ENCODE measurements at regions of chr14 and their contacts with region 1.

Region 1: GRCh38 chr14:24366721-24367513 is 1.1 kb upstream of the NFATC4 start:
- DNase-seq: peak; percentile 96
- H3K4me3 ChIP-seq: peak overlapping the region; percentile 69 to 90 (median 80)
- H3K27ac ChIP-seq: peak overlapping the region; percentile 91 to 99 (median 98)
- H3K4me1 ChIP-seq: peaks cover 0 to 52% (median 37%) of the 10 kb centered on the region in 4 donors
- H3K27me3 ChIP-seq: no peaks in the 10 kb centered on the region
- CTCF ChIP-seq: no peak
- EP300 ChIP-seq: peak in 1 of 4 donors; percentile 46
- POLR2A ChIP-seq: peak; percentile 56 to 66

Region 2: GRCh38 chr14:24141097-24141880 is 225.6 kb before region 1 on chr14 and contains the start of gene EMC9:
- intact Hi-C with region 1: loop called (anchors 5 kb)
- DNase-seq: peak; percentile 100
- H3K4me3 ChIP-seq: peak within 1 kb of the TSS; percentile 73 to 91 (median 81)
- H3K27ac ChIP-seq: peak within 1 kb of the TSS; percentile 92 to 98 (median 96)
- H3K4me1 ChIP-seq: peaks cover 0 to 61% (median 51%) of the 10 kb centered on the region in 4 donors
- H3K27me3 ChIP-seq: no peaks in the 10 kb centered on the region
- CTCF ChIP-seq: peak; percentile 36 to 75 (median 64)
- EP300 ChIP-seq: no peak
- POLR2A ChIP-seq: peak; percentile 83 to 88
- total RNA-seq, gene EMC9: 5.0 to 20.9 (median 12.9) TPM

Region 3: DNA sequence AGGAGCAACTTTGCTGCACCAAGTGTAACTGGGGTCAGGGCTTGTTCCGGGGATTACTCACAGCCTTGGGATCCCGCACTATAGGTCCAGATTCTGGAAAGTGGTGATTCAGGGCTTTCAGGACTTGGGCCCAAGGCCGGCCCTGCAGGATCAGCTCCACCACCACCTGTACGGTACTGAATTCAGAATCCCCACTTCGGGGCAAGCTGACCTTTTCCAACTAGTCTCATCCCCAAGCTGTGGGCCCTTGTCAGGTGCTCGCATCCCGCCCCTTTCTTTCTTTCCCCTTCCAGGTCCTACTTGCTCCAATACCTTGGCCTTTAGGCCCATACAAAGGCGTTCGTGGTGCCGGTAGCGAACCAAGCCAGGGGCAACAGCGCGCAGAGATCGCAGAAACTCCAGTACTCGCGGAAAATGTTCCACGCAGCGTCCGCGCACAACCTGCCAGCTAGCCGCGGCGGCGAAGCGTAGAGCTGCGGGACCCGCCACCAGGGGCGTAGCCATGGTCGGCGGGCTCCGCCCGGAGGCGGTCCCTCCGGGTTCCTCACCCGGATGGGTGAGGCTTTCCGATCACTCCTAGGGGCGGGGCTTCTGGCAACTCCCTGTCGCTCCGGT is 125.0 kb before region 1 on chr14:
- intact Hi-C with region 1: loop called (anchors 2 kb)
- DNase-seq: peak; percentile 97
- H3K4me3 ChIP-seq: peak overlapping the region; percentile 57 to 81 (median 70)
- H3K27ac ChIP-seq: peak overlapping the region; percentile 95 to 98 (median 97)
- H3K4me1 ChIP-seq: peaks cover 0 to 43% (median 36%) of the 10 kb centered on the region in 4 donors
- H3K27me3 ChIP-seq: no peaks in the 10 kb centered on the region
- CTCF ChIP-seq: peak; percentile 55 to 89 (median 74)
- EP300 ChIP-seq: no peak
- POLR2A ChIP-seq: no peak

Region 4: DNA sequence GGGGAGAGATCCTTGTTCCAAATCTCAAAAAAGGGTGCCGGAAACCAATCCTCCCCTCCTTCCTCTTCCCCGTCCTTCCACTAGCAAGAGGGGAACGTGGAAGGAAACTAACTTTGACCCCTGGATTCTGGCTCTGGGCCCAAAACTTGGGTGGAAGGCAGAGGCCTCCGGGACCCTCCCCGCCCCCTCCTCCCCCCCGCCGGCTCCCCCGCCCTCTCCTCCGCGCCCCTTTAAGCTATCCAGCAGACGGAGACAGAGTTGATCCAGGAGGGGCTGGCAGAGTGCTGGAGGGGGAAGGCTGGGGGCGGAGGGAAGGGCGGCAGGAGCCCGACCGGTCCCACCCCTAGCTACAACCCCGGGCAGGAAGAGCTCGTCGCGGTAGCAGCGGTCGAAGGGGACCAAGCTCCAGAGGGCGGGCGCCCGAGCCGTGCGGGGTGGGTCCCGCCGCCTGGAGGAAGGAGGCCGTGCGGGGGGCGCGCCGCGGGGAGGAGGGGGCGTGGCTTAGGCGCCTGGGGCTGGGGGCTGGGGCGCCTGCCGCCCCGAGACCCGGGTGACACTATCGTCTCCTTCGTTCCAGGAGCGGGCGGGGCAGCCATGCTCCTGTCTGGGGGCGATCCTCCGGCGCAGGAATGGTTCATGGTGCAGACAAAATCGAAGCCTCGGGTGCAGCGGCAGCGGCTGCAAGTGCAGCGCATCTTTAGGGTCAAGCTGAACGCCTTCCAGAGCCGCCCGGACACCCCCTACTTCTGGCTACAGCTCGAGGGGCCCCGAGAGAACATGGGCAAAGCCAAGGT is 31.9 kb after region 1 on chr14 and contains the start of gene NYNRIN:
- intact Hi-C with region 1: loop called (anchors 1 kb)
- DNase-seq: peak; percentile 82
- H3K4me3 ChIP-seq: peak within 1 kb of the TSS; percentile 73 to 85 (median 78)
- H3K27ac ChIP-seq: peak within 1 kb of the TSS; percentile 76 to 82 (median 78)
- H3K4me1 ChIP-seq: peaks cover 0 to 59% (median 50%) of the 10 kb centered on the region in 4 donors
- H3K27me3 ChIP-seq: no peaks in the 10 kb centered on the region
- CTCF ChIP-seq: no peak
- EP300 ChIP-seq: no peak
- POLR2A ChIP-seq: no peak
- total RNA-seq, gene NYNRIN: 6.8 to 17.4 (median 7.0) TPM

Region 5: GRCh38 chr14:24431569-24432258 is 64.8 kb after region 1 on chr14:
- intact Hi-C with region 1: loop called (anchors 1 kb)
- DNase-seq: peak; percentile 95
- H3K4me3 ChIP-seq: peak overlapping the region; percentile 73 to 87 (median 76)
- H3K27ac ChIP-seq: peak overlapping the region; percentile 94 to 96 (median 95)
- H3K4me1 ChIP-seq: peaks cover 0 to 46% (median 41%) of the 10 kb centered on the region in 4 donors
- H3K27me3 ChIP-seq: no peaks in the 10 kb centered on the region
- CTCF ChIP-seq: peak; percentile 79 to 92 (median 84)
- EP300 ChIP-seq: no peak
- POLR2A ChIP-seq: no peak

Region 6: DNA sequence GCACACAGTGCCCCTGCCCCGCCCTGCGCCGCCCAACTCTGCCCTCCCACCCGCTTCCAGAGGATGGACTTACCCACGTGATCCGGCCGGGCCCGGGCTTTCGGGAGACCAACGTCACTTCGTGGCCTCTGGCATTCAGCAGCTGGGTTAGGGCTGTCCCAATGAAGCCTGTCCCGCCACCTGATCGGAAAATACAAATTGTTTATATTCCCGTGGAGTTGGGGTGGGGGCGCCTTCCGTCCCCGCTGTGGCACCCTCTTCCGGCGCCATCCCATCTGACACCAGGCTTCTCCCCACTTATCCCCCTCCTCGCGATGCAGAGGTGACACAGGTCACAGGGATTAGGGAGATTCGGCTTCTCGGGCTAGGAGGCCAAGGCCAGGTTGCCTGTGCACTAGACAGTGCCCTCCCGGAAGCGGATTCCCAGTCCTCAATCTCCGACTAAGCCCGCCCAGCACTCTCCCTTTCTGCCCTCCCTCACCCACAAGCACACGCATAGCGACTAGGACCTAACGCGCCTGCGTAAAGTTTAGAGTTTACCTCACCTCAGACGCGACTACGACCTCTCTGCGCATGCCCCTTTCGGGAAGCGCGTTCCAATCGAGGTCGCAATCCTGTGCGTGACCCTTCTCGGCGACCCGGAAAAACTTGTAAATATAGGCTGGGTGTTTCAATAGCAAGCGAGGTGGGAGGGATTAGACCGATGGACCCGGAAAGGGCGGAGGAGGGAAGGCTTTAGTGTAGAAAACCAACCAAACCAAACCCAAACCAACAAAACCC is 75.5 kb after region 1 on chr14 and contains the start of gene SDR39U1:
- intact Hi-C with region 1: loop called (anchors 1 kb)
- DNase-seq: peak; percentile 99
- H3K4me3 ChIP-seq: peak within 1 kb of the TSS; percentile 66 to 80 (median 70)
- H3K27ac ChIP-seq: peak within 1 kb of the TSS; percentile 95 to 99 (median 98)
- H3K4me1 ChIP-seq: peaks cover 0 to 31% (median 29%) of the 10 kb centered on the region in 4 donors
- H3K27me3 ChIP-seq: no peaks in the 10 kb centered on the region
- CTCF ChIP-seq: no peak
- EP300 ChIP-seq: no peak
- POLR2A ChIP-seq: peak; percentile 76 to 80
- total RNA-seq, gene SDR39U1: 30.3 to 45.4 (median 33.9) TPM

Region 7: DNA sequence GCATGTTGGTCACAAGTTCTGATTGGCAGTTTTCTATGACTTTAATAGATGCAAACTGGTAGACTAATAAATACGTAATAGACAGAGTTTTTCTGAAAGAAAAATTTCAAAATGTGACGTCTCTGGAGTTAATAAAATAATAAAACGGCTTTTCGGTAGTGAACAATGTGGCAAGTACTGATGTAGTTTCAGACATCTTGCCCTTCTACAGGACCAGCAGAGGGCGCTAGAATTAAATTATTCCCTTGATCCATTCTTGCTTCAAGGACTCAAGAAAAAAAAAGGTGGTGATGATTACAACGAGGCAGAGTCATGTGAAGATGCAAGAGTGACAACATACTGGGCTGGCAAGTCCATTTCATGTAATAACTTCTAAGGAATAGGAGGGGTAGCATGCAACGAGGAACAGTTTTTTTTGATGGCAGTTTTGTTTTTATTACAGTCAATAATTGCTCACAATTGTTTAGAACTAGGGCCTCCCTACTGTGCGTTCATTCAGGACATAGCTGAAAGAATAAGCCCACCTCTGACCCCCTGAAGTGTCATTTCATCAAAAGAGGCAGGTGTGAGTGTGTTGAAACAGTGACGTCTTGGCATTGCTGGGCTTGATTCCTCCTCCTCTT is 368.1 kb after region 1 on chr14:
- intact Hi-C with region 1: no loop called
- DNase-seq: no peak
- H3K4me3 ChIP-seq: no peak overlapping the region
- H3K27ac ChIP-seq: no peak overlapping the region
- H3K4me1 ChIP-seq: no peaks in the 10 kb centered on the region
- H3K27me3 ChIP-seq: no peaks in the 10 kb centered on the region
- CTCF ChIP-seq: peak in 3 of 4 experiments; percentile 39 to 68 (median 49)
- EP300 ChIP-seq: no peak
- POLR2A ChIP-seq: no peak